Tibial artery (tissue), 4 donors: ENCODE measurements at regions of chr7 and their contacts with region 1.

Region 1: GRCh38 chr7:44184206-44184872 is 4.9 kb downstream of the GCK start:
- DNase-seq: no peak
- H3K4me3 ChIP-seq: no peak overlapping the region
- H3K27ac ChIP-seq: no peak overlapping the region
- H3K4me1 ChIP-seq: no peaks in the 10 kb centered on the region
- H3K27me3 ChIP-seq: peaks cover 0 to 12% of the 10 kb centered on the region in 2 donors
- CTCF ChIP-seq: no peak

Region 2: DNA sequence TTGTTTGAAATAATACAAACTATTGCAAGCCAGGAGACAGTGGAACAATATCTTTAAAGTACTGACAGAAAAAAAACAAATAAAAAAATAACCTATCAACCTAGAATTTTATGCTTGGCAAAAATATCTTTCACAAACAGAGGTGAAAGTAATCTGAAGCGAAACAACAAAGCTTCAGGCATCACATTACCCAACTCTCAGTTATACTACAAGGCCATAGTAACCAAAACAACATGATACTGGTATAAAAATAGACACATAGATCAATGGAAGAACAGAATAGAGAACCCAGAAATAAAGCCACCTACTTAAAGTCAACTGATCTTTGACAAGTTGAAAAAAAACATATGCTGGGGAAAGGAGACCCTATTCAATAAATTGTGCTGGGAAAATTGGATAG is 1098.3 kb before region 1 on chr7:
- intact Hi-C with region 1: loop called (anchors 5 kb)
- DNase-seq: no peak
- H3K4me3 ChIP-seq: no peak overlapping the region
- H3K27ac ChIP-seq: no peak overlapping the region
- H3K4me1 ChIP-seq: no peaks in the 10 kb centered on the region
- H3K27me3 ChIP-seq: peaks cover 0 to 7% of the 10 kb centered on the region in 2 donors
- CTCF ChIP-seq: no peak

Region 3: DNA sequence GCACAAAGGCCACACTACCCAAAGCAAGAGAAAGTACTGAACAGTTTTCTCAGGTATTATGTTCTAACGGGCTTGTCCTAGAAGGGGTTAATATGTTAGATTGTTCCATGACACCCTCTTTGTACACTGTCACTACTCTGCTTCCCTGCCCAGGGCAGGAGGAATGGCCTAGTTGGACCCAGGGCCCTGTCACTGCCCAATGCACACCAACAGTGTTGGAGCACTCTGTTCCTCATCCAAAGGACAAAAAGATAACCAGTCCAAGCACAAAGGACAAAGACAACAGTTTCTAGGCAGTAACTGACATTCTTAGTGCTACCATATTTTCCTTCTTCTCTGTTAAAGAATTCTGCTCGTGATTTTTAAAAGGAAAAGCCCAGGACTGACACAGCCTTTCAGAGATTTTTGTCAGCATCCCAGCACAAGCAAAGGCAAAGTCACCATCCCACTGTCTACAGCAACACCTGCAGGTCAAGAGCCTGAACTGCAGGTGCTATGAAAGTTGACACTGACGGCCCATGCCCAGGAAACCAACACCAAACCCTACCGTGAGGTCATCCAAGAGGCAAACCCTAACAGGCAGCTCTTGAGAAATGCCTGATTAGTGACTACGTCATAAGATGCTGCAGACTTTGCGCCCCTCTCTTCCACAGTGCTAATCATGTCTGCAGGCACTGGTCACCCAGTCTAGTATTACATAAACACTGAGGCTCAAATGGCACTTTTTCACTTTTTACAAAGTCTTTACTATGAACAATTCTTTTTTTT is 292.9 kb after region 1 on chr7:
- intact Hi-C with region 1: no loop called
- DNase-seq: peak in 1 of 2 donors; percentile 36
- H3K4me3 ChIP-seq: no peak overlapping the region
- H3K27ac ChIP-seq: no peak overlapping the region
- H3K4me1 ChIP-seq: peaks cover 0 to 13% (median 5%) of the 10 kb centered on the region in 4 donors
- H3K27me3 ChIP-seq: no peaks in the 10 kb centered on the region
- CTCF ChIP-seq: peak; percentile 84 to 86